Activated CD4-positive, alpha-beta T cell treated with anti-CD3 and anti-CD28 coated beads for 36 hours (primary cell): ENCODE measurements at regions of chr11 and their contacts with region 1.

Region 1: DNA sequence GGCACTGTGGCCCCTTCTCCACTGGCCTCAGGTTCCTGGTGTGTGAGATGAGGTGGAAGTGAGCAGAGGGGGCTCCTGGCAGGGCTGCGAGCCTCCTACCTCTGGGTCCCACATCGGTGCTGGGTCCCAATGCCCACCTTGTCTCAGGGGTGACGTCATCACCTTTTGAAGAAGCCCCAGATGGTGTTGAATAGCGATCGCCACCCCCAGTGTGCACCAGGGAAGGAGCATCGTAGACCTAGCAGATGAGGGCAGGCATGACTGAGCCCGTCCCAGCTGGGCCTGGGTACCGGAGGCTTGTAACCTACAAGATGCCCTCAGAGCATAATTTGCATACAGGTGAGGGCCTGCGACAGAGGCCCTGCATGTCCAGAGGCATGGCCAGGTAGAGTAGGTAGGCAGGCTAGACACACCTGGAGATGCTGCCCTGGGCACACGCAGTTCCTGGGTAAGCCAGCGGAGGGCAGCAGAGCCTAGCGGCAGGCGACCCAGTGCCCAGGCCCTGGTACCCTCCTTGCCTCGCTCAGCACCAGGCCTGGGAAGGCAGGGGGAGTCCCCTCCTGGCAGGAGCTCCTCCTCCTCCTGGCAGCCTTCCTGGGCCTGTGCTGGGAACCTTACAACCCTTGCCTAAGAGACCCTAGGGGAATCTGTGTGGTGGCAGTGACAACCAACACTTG is 52.5 kb downstream of the TPCN2 start:
- DNase-seq: peak; percentile 85
- ATAC-seq: peak; percentile 93
- H3K4me3 Mint-ChIP-seq: no peak overlapping the region
- H3K27ac Mint-ChIP-seq: no peak overlapping the region
- H3K4me1 Mint-ChIP-seq: peaks cover 2% of the 10 kb centered on the region
- H3K27me3 Mint-ChIP-seq: no peaks in the 10 kb centered on the region

Region 2: GRCh38 chr11:69427337-69427736 is 326.1 kb after region 1 on chr11:
- CTCF ChIA-PET with region 1: no interaction called
- POLR2A ChIA-PET with region 1: no interaction called
- intact Hi-C with region 1: loop called in 1 of 2 experiments (anchors 5 kb)
- DNase-seq: no peak
- ATAC-seq: no peak
- H3K4me3 Mint-ChIP-seq: no peak overlapping the region
- H3K27ac Mint-ChIP-seq: no peak overlapping the region
- H3K4me1 Mint-ChIP-seq: peaks cover 13% of the 10 kb centered on the region
- H3K27me3 Mint-ChIP-seq: peaks cover 9% of the 10 kb centered on the region